ENCODE measurements at regions of chr18 and their contacts with region 1.

Region 1: DNA sequence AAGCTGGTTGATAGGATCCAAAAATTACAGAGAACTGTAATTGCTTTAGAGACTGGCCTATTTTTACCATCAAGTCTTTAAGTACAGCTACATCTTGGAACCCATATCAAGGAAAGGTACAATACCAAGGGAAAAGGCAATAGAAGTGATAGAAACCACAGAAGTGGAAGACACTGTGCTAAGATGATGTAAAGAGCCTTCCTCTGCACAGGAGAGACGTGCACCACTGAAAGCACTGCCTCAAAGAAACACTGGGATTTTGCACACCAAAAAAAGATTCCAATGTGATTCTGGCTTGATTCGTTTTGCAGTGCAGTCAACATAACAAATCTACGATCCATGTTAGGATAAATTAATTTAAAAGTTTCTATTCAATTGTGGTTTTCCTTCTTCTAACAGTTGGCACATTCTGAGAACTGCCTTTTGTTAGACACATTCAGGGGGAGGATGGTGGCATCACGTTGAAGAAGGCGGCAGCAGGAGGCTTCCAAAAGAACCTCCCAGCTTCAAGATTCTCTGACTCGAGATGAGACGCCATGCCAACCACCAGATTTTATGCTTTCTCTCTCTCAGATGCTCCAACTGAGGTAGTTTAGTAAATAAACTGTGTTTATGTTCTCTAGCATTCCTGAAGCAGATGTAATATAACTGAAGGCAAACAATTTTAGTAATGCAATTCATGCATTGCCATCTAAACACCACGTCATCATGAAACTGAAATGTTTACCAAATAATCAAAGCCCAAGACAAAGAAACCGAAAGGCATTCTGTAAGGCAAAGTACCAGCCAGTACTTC is 102.9 kb downstream of the BCL2 start:
- DNase-seq: no peak
- H3K4me3 Mint-ChIP-seq: peak overlapping the region; percentile 67
- H3K27ac Mint-ChIP-seq: peak overlapping the region; percentile 89
- H3K4me1 Mint-ChIP-seq: peaks cover 94% of the 10 kb centered on the region
- H3K27me3 Mint-ChIP-seq: no peaks in the 10 kb centered on the region

Region 2: DNA sequence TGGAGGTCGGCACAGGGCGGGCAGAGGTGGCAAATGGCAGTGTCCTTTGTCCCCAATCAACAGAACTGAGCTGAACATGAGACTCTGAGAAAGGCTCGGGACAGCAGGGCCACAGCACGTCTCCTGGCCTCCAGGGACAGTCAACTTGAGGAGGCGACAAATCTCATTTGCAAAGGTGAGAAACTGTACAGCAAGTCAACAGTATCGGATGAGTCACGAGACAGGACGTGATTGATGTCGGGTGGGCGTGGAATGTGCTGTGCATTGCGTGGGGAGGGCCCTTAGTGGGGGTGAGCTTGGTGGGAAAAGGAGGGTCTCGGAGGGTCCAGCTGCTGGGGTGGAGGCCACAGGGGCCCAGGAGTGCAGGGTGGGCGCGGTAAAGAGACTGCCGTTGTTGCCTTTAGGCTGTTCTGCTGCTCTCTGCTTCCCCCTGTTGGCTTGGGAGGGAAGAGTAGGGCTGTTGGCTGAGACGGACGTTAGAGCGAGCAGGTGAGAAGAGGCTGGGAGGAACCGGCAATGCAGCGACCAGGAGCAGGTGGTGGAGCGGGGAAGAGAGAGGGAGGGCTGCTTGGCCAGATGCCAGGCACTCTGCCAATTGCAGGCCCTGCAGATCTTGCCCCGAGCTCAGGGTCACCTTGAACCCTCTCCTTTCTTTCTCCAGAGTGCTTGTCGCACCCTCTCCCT is 61.4 kb before region 1 on chr18:
- intact Hi-C with region 1: loop called (anchors 1 kb)
- DNase-seq: peak; percentile 72
- H3K4me3 Mint-ChIP-seq: peak overlapping the region; percentile 79
- H3K27ac Mint-ChIP-seq: peak overlapping the region; percentile 88
- H3K4me1 Mint-ChIP-seq: peaks cover 99% of the 10 kb centered on the region
- H3K27me3 Mint-ChIP-seq: no peaks in the 10 kb centered on the region

Region 3: DNA sequence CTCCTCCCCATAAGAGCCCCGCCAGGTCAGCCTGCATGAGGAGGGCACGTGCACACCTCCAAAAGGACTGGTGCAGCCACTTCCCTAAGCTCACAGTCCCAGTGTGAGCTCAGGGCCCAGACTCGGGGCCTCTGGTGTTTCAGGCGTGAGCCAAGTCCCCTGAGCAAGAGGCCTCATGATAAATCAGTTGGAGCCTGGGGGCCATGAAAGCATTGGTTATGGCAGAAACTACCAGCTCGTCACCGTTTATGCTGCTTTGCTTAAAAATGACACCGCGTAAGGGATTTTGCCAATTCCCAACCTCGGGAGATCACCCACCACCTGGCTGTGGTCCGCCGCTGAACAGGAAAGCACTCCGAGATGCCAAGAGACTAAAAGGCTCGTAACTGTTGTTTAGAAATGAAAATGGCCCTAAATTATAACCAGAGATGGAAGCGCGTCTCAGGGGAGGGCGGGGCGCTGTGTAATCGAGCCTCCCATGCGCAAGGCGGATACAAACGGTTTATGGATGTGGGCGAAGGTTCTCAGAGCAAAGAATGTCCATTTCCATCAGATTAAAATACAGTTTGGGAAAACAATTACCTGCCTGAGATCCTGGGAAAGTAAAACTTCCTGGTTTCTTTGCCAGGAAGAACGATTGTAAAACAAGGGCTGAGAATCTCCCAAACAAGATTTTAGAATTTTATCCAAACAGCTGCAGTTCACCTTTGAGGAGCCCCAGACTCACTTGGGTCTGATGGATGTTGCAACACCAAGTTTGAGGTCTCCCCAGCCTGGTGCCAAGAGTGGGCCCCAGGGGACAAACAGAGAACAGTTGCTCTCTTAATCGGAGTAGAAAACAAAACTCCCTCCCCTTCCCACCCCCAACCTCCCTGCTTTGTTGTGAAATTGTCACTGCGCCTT is 38.5 kb before region 1 on chr18:
- intact Hi-C with region 1: no loop called
- DNase-seq: no peak
- H3K4me3 Mint-ChIP-seq: no peak overlapping the region
- H3K27ac Mint-ChIP-seq: no peak overlapping the region
- H3K4me1 Mint-ChIP-seq: peaks cover 36% of the 10 kb centered on the region
- H3K27me3 Mint-ChIP-seq: no peaks in the 10 kb centered on the region

Region 4: DNA sequence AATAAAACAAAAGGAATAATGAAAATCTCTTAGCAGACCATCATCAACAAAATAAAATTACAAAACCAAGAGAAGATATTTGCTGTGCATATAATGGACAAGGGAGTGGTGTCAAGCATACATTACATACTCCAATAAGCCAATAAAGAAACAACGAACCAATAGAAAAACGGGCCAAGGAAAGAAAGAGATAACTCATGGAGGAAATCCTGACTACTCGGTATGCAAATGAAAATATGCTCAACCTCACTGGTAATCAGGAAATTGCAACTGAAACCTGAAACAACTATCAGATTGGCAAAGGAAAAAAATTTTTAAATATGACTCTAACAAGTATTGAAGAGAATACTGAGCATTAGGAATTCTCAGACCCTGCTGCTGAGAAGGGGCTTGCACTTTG is 18.1 kb after region 1 on chr18:
- intact Hi-C with region 1: loop called (anchors 1 kb)
- DNase-seq: no peak
- H3K4me3 Mint-ChIP-seq: peak overlapping the region; percentile 2
- H3K27ac Mint-ChIP-seq: peak overlapping the region; percentile 70
- H3K4me1 Mint-ChIP-seq: peaks cover 76% of the 10 kb centered on the region
- H3K27me3 Mint-ChIP-seq: no peaks in the 10 kb centered on the region

Region 5: DNA sequence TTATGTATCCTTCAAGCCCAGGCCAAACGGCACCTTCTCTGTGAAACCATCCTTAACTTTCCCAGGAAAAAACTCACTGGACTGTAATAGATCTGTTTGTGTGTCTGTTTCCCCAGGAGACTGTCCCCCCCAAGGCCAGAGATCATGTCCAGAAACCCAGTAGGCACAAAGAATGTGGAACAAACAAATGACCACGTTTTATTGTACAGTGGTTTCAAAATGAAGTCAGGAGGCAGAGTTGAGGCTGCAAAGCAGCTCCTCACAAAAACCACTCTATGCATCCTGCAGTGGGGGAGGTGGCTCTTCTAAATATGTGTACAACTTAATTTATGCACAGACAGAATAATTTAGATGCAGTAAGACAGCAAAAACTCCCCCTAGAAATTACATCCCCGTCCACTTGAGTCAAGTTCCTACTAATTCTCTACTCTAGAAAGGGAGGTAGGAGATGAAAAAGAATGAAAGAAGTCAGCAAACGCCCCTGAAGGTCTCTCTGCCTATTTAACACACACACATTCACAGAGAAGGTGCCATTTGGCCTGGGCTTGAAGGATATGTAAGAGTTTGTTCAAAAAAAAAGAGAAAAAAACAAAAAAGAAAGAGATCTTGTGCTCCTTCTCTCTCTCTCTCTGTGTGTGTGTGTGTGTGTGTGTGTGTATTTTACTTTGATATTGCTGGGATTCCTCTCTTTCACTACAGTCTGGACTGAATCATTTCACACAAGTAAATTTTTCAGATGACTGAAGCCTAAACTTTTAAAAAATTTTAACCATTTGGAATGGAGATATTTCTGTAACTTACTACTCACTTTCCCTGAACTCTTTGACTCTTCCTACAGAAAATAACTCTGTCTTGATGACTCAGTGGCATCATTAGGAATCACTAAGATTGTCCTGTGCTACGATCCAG is 83.4 kb after region 1 on chr18:
- intact Hi-C with region 1: loop called (anchors 1 kb)
- DNase-seq: no peak
- H3K4me3 Mint-ChIP-seq: peak overlapping the region; percentile 76
- H3K27ac Mint-ChIP-seq: peak overlapping the region; percentile 96
- H3K4me1 Mint-ChIP-seq: peaks cover 91% of the 10 kb centered on the region
- H3K27me3 Mint-ChIP-seq: no peaks in the 10 kb centered on the region